ENCODE measurements at regions of chr14 and their contacts with region 1.

Region 1: GRCh38 chr14:96362965-96363756 is at the starts of genes ATG2B and GSKIP:
- DNase-seq: peak; percentile 91
- ATAC-seq: peak; percentile 72
- H3K4me3 ChIP-seq: peak within 1 kb of the TSS; percentile 83
- H3K27ac ChIP-seq: no peak within 1 kb of the TSS; the same call in 1 of the 2 replicates
- H3K4me1 ChIP-seq: peaks cover 21% of the 10 kb centered on the region
- H3K27me3 ChIP-seq: no peaks in the 10 kb centered on the region
- CTCF ChIP-seq: no peak
- total RNA-seq, gene ATG2B: 10.9 and 11.6 TPM in 2 replicates
- total RNA-seq, gene GSKIP: 13.7 and 22.6 TPM in 2 replicates

Region 2: DNA sequence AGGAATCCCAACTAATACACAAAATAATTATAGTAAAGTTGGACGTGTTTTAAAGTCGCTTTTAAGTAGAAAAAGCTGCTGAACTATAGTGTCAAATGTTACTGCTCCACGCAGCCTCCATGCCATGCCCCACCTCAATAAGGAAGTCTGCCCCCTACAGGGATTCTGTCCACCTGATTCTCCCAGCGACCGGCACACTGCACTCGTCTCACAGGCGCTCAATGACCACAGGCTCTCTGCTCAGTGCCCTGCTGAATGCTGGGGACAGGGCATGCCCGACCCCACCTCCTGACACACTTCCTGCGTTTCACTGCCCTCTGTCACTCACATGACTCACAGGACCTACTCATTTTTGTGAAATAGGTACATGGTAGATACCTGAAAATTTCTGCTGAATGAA is 58.2 kb before region 1 on chr14:
- CTCF ChIA-PET with region 1: no interaction called
- POLR2A ChIA-PET with region 1: no interaction called
- intact Hi-C with region 1: loop called (anchors 10 kb)
- DNase-seq: peak; percentile 19
- ATAC-seq: peak; percentile 59
- H3K4me3 ChIP-seq: no peak overlapping the region
- H3K27ac ChIP-seq: no peak overlapping the region
- H3K4me1 ChIP-seq: peaks cover 9% of the 10 kb centered on the region
- H3K27me3 ChIP-seq: no peaks in the 10 kb centered on the region
- CTCF ChIP-seq: peak; percentile 40; the same call in 1 of the 2 replicates

Region 3: DNA sequence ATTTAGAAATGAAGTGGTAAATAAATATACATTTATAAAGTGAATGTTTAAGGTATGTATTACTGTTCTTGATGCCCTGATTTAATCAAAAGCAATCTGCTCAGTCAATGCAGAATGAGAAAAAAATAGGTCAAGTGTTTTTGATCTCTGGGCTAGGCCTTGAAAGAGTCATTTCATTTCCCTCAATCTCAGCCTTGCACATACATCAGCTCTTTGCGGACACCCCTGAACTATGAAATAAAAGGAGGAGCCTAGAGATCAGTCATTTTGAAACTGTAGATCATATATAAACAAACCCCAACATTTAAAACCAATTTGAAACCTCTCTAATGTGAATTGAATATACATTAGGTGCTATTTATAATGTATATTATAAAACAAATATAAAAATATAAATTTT is 42.6 kb before region 1 on chr14:
- CTCF ChIA-PET with region 1: no interaction called
- POLR2A ChIA-PET with region 1: no interaction called
- intact Hi-C with region 1: no loop called
- DNase-seq: no peak
- ATAC-seq: no peak
- H3K4me3 ChIP-seq: no peak overlapping the region
- H3K27ac ChIP-seq: no peak overlapping the region
- H3K4me1 ChIP-seq: no peaks in the 10 kb centered on the region
- H3K27me3 ChIP-seq: no peaks in the 10 kb centered on the region
- CTCF ChIP-seq: no peak

Region 4: DNA sequence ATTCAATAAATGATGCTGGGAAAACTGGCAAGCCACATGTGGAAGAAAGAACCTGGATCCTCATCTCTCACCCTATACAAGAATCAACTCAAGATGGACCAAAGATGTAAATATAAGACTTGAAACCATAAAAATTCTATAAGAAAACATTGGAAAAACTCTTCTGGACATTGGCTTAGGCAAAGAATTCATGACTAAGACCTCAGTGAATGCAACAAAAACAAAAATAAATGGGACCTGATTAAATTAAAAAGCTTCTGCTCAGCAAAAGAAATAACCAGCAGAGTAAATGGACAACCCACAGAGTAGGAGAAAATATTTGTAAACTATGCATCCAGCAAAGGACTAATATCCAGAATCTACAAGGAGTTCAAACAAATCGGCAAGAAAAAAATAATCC is 24.6 kb before region 1 on chr14:
- CTCF ChIA-PET with region 1: no interaction called
- POLR2A ChIA-PET with region 1: no interaction called
- intact Hi-C with region 1: no loop called
- DNase-seq: no peak
- ATAC-seq: no peak
- H3K4me3 ChIP-seq: no peak overlapping the region
- H3K27ac ChIP-seq: no peak overlapping the region
- H3K4me1 ChIP-seq: no peaks in the 10 kb centered on the region
- H3K27me3 ChIP-seq: no peaks in the 10 kb centered on the region
- CTCF ChIP-seq: no peak

Region 5: DNA sequence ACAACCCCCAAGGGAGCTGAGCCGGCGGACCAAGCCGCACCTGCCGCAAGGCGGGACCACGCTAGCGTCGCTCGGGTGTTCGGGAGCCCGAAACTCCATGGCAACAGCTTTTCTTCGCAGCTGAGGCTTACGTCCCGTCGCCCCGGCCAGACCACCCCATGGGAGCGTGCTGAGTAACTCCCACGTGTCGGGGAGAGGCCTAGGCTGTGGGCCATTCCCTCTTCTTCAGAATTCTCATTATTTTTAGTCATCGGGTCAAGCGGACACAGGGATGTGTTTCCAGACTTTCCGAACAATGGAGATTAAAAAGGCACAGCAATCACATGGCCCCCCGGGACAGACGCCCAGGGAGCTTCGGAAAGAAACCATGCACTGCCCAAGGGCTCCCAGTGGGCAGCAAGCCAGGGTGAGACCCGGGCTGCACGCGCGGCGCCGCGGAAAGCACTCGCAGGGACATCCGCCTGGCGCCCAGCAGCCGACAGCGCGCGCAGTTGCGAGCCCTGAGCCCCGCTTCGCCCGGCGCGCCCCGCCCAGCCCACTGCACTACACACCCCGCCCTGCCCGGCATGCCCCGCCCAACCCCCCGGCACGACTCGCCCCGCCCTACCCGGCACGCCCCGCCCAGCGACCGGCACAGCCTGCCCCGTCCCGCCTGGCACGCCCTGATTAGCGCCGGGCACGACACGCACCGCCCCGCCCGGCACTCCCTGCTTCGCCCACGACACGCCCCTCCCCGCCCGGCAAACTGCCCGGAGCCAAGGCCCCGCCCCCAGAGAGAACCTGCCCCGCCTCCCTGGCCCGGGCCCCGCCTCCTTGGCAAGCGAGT is 28.3 kb after region 1 on chr14:
- CTCF ChIA-PET with region 1: no interaction called
- POLR2A ChIA-PET with region 1: no interaction called
- intact Hi-C with region 1: loop called (anchors 1 kb)
- DNase-seq: peak; percentile 88
- ATAC-seq: peak; percentile 95
- H3K4me3 ChIP-seq: peak overlapping the region; percentile 98
- H3K27ac ChIP-seq: no peak overlapping the region
- H3K4me1 ChIP-seq: no peaks in the 10 kb centered on the region; the same call in 1 of the 2 replicates
- H3K27me3 ChIP-seq: no peaks in the 10 kb centered on the region
- CTCF ChIP-seq: no peak

Region 6: DNA sequence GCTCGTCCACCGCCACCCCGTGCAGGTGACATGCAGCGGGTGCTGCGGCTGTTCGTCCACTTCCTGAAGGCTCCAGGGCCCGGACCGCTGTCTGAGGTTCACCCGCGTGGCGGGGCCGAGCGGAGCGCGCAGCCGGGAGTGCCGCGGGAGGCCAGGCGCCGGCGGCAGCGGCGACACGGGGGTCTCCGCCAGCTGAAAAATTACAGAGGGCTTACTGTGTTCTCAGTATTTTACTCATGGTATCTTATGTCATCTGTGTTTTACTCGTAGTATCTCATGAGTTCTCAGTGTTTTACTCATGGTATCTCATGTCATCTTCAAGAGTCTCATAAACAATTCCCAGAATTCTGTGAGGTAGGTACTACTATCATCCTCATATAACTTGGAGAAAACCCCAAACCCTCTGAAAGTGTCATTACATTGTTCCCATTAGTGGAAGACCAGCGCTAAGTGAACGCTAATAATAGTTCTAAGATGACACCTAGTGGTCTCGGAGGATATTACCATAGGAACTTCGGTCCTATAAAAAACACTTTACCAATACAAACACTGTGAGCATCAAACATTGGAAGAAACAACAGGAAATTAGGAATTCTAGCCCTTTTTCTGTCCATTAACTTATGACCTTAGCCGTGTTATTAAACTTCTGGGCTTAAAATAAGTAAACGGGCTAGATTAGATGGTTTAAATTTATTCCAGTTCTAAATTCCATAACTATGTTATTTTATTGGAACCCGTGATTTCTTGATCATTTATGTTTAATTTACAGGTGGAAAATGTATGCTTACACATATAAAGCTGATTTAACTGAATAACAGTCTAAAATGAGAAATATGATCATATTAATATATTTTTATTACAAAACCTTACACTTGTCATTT is 61.2 kb after region 1 on chr14:
- CTCF ChIA-PET with region 1: no interaction called
- POLR2A ChIA-PET with region 1: no interaction called
- intact Hi-C with region 1: loop called (anchors 5 kb)
- DNase-seq: peak; percentile 89
- ATAC-seq: peak; percentile 92
- H3K4me3 ChIP-seq: peak overlapping the region; percentile 71
- H3K27ac ChIP-seq: no peak overlapping the region
- H3K4me1 ChIP-seq: no peaks in the 10 kb centered on the region
- H3K27me3 ChIP-seq: no peaks in the 10 kb centered on the region; the same call in 1 of the 2 replicates
- CTCF ChIP-seq: peak; percentile 92

Region 7: GRCh38 chr14:96501742-96502617 is 138.8 kb after region 1 on chr14 and contains the start of gene PAPOLA:
- CTCF ChIA-PET with region 1: no interaction called
- POLR2A ChIA-PET with region 1: no interaction called
- intact Hi-C with region 1: loop called (anchors 5 kb)
- DNase-seq: peak; percentile 96
- ATAC-seq: peak; percentile 91
- H3K4me3 ChIP-seq: peak within 1 kb of the TSS; percentile 96
- H3K27ac ChIP-seq: peak within 1 kb of the TSS; percentile 63
- H3K4me1 ChIP-seq: peaks cover 33% of the 10 kb centered on the region
- H3K27me3 ChIP-seq: no peaks in the 10 kb centered on the region
- CTCF ChIP-seq: 0 out of 2 replicates have a peak, but pooled peaks have one; percentile 15
- total RNA-seq, gene PAPOLA: 111 and 123 TPM in 2 replicates

Measured in PC-3 (cell line).